ENCODE measurements at regions of chr9 and their contacts with region 1.

Region 1: GRCh38 chr9:73423891-73424290 is 272.2 kb downstream of the ANXA1 start:
- DNase-seq: no peak
- H3K4me3 ChIP-seq: no peak overlapping the region
- H3K27ac ChIP-seq: no peak overlapping the region
- H3K4me1 ChIP-seq: no peaks in the 10 kb centered on the region
- H3K27me3 ChIP-seq: no peaks in the 10 kb centered on the region
- CTCF ChIP-seq: no peak

Region 2: DNA sequence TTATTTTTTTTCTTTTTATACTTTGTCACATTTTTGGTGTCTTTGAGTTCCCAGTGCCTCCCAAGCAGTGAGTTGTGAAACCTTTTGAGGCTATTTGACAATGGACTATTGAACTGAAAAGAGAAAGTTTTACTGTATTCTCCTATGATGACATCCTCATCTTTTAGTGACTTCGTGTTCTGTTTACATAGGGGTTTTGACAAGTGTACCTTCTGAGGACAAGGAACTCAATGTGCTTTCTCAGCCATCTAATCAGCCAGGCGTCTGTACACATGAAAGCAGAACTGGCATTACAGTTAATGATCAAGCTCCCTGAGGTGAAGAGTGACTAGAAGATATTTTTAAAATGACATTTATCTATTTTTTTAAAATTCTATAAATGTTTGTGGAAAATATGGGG is 96.7 kb before region 1 on chr9:
- CTCF ChIA-PET with region 1: no interaction called
- POLR2A ChIA-PET with region 1: no interaction called
- intact Hi-C with region 1: no loop called
- DNase-seq: no peak
- H3K4me3 ChIP-seq: no peak overlapping the region
- H3K27ac ChIP-seq: no peak overlapping the region
- H3K4me1 ChIP-seq: no peaks in the 10 kb centered on the region
- H3K27me3 ChIP-seq: no peaks in the 10 kb centered on the region
- CTCF ChIP-seq: no peak

Region 3: DNA sequence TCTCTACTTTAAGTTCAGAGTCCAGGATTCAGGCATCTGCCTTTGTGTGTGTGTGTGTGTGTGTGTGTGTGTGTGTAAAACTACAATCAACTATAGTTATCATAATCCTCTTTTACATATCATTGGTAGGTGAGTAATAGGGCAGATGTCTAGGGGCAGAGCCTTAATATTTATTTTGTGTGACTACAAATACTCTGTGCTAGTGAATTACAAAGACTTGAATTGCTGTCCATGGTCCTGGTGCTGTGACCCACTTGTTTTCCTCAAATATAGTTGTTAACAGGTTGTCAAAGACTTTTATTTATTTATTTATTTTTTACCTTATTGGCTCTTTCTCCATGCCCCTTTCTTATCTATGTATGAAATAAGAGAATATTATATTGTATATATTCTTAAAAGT is 75.4 kb before region 1 on chr9:
- CTCF ChIA-PET with region 1: no interaction called
- POLR2A ChIA-PET with region 1: no interaction called
- intact Hi-C with region 1: loop called (anchors 5 kb)
- DNase-seq: no peak
- H3K4me3 ChIP-seq: no peak overlapping the region
- H3K27ac ChIP-seq: no peak overlapping the region
- H3K4me1 ChIP-seq: peaks cover 8% of the 10 kb centered on the region; the same call in 1 of the 2 replicates
- H3K27me3 ChIP-seq: no peaks in the 10 kb centered on the region
- CTCF ChIP-seq: no peak

Region 4: GRCh38 chr9:73451003-73451402 is 27.1 kb after region 1 on chr9:
- CTCF ChIA-PET with region 1: no interaction called
- POLR2A ChIA-PET with region 1: no interaction called
- intact Hi-C with region 1: no loop called
- DNase-seq: no peak
- H3K4me3 ChIP-seq: no peak overlapping the region
- H3K27ac ChIP-seq: no peak overlapping the region
- H3K4me1 ChIP-seq: no peaks in the 10 kb centered on the region
- H3K27me3 ChIP-seq: no peaks in the 10 kb centered on the region
- CTCF ChIP-seq: no peak